CD4-positive, alpha-beta T cell (primary cell): ENCODE measurements at regions of chr1 and their contacts with region 1.

Region 1: DNA sequence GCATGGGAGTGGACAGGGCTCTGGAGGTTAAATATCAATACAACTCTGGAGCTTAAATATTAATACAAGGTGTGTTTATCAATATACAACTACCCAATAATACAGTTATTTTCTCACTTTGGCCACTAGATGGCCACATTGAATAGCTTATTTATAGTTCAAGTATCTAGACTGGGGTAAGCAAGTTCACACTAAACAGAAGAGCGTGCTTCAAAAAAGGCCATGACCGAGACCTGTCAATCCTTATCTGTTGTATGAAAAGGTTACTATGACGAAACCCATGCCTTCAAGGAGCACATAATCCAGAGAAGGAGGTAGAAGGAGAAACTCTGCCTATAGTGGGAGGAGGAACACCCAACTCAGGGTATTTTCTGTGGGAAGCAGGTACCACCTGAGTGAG is 29.1 kb downstream of the CHML start:
- DNase-seq: peak in 5 of 14 experiments; percentile 5 to 76 (median 68)
- ATAC-seq: peak; percentile 93
- H3K4me3 ChIP-seq: no peak overlapping the region
- H3K4me3 Mint-ChIP-seq: no peak overlapping the region
- H3K27ac ChIP-seq: no peak overlapping the region
- H3K27ac Mint-ChIP-seq: no peak overlapping the region
- H3K4me1 ChIP-seq: no peaks in the 10 kb centered on the region
- H3K4me1 Mint-ChIP-seq: no peaks in the 10 kb centered on the region
- H3K27me3 ChIP-seq: no peaks in the 10 kb centered on the region
- H3K27me3 Mint-ChIP-seq: no peaks in the 10 kb centered on the region
- CTCF ChIP-seq: peak; percentile 85

Region 2: GRCh38 chr1:241275981-241276380 is 335.1 kb before region 1 on chr1:
- CTCF ChIA-PET with region 1: no interaction called
- POLR2A ChIA-PET with region 1: no interaction called
- intact Hi-C with region 1: no loop called
- DNase-seq: no peak
- ATAC-seq: no peak
- H3K4me3 ChIP-seq: no peak overlapping the region
- H3K4me3 Mint-ChIP-seq: no peak overlapping the region
- H3K27ac ChIP-seq: no peak overlapping the region
- H3K27ac Mint-ChIP-seq: no peak overlapping the region
- H3K4me1 ChIP-seq: no peaks in the 10 kb centered on the region
- H3K4me1 Mint-ChIP-seq: no peaks in the 10 kb centered on the region
- H3K27me3 ChIP-seq: no peaks in the 10 kb centered on the region
- H3K27me3 Mint-ChIP-seq: no peaks in the 10 kb centered on the region
- CTCF ChIP-seq: no peak

Region 3: DNA sequence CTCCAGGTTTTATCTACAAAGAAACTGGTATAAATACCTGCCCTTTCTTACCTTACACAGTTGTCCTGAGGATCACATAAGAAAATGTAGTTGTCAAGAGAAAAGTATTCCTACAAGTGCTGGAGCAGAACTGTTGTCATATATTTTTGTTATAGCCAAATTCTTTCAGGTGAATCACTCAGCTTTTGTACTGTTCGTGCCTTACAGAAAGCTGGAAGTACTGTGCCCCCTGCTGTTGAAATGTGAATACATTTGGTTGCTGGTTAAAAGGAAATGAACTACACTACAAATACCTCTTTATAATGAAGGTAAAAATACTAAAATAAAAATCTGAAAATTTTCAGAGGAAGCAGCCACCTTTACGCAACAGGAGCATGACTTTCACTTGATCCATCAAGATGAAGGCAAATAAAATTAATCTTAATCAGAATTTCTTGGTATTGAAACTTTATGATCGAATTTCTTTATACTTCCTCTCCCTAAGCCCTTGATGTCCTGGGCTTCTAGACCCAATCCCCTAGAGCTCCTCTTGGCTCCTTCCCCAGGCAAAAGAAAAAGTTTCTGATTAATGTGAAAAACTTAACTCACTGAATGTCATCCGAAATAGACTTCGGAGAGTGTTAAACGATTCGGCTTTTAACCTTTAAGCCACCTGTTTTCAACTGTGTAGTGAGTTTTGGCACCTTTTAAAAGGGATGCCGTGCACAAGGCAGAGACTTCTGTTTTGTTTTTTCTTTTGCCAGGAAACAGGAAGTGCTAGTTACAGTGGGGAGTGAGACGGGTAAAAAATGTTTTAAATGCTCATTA is 16.6 kb after region 1 on chr1:
- CTCF ChIA-PET with region 1: interaction called, 24 read pairs
- POLR2A ChIA-PET with region 1: interaction called, 23 read pairs
- intact Hi-C with region 1: loop called (anchors 1 to 2 kb)
- DNase-seq: peak in 10 of 14 experiments; percentile 8 to 82 (median 40)
- ATAC-seq: peak; percentile 89
- H3K4me3 ChIP-seq: peak overlapping the region; percentile 30
- H3K4me3 Mint-ChIP-seq: peak overlapping the region; percentile 88
- H3K27ac ChIP-seq: peak overlapping the region; percentile 13 to 59
- H3K27ac Mint-ChIP-seq: peak overlapping the region; percentile 94
- H3K4me1 ChIP-seq: peaks cover 2% of the 10 kb centered on the region
- H3K4me1 Mint-ChIP-seq: peaks cover 24% of the 10 kb centered on the region
- H3K27me3 ChIP-seq: no peaks in the 10 kb centered on the region
- H3K27me3 Mint-ChIP-seq: no peaks in the 10 kb centered on the region
- CTCF ChIP-seq: peak; percentile 88

Region 4: GRCh38 chr1:241847796-241848685 is 237.0 kb after region 1 on chr1 and contains the start of gene EXO1:
- CTCF ChIA-PET with region 1: no interaction called
- POLR2A ChIA-PET with region 1: interaction called, 5 read pairs
- intact Hi-C with region 1: loop called (anchors 5 kb)
- DNase-seq: peak; percentile 75 to 95 (median 85)
- ATAC-seq: peak; percentile 96
- H3K4me3 ChIP-seq: peak within 1 kb of the TSS; percentile 98
- H3K4me3 Mint-ChIP-seq: peak within 1 kb of the TSS; percentile 99
- H3K27ac ChIP-seq: peak within 1 kb of the TSS; percentile 95 to 100
- H3K27ac Mint-ChIP-seq: peak within 1 kb of the TSS; percentile 99
- H3K4me1 ChIP-seq: peaks cover 12% of the 10 kb centered on the region
- H3K4me1 Mint-ChIP-seq: peaks cover 19% of the 10 kb centered on the region
- H3K27me3 ChIP-seq: no peaks in the 10 kb centered on the region
- H3K27me3 Mint-ChIP-seq: no peaks in the 10 kb centered on the region
- CTCF ChIP-seq: peak; percentile 47
- total RNA-seq, gene EXO1: 0.25 to 1.1 TPM

Region 5: DNA sequence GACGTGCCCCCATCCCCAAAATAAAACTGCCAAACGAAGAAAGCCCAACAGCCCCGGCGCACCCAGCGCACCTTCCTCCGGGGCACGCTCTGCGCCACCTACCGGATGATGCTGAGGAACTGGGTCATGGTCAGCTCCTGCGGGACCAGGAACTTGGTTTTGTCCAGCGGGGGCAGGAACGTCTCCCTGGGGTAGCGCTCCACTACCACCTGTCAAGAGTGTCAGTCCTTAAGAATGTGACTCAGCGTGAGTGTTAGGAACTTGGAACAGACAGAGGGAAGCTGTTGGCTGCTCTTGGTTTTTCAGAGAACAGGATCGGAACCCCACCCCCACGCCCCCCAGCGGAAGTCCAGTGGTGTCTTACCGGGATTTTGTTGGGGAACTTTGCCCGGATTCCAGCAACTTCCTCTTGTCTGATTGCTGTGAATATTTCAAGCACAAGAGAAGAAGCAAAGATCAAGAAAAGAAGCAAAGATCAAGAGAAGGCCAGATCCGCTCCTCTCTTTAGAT is 387.4 kb after region 1 on chr1:
- CTCF ChIA-PET with region 1: interaction called, 6 read pairs
- POLR2A ChIA-PET with region 1: no interaction called
- intact Hi-C with region 1: loop called (anchors 2 to 5 kb)
- DNase-seq: peak; percentile 3 to 64 (median 25)
- ATAC-seq: peak; percentile 46
- H3K4me3 ChIP-seq: peak overlapping the region; percentile 25
- H3K4me3 Mint-ChIP-seq: no peak overlapping the region
- H3K27ac ChIP-seq: no peak overlapping the region
- H3K27ac Mint-ChIP-seq: no peak overlapping the region
- H3K4me1 ChIP-seq: peaks cover 6% of the 10 kb centered on the region
- H3K4me1 Mint-ChIP-seq: no peaks in the 10 kb centered on the region
- H3K27me3 ChIP-seq: peaks cover 0 to 2% of the 10 kb centered on the region in 2 experiments
- H3K27me3 Mint-ChIP-seq: peaks cover 4% of the 10 kb centered on the region
- CTCF ChIP-seq: peak; percentile 76